ENCODE measurements at regions of chr1 and their contacts with region 1.

Region 1: GRCh38 chr1:40449684-40450494 is at the start of gene ZFP69B:
- DNase-seq: peak; percentile 94
- H3K4me3 ChIP-seq: peak within 1 kb of the TSS; percentile 30 to 84 (median 54)
- H3K27ac ChIP-seq: peak within 1 kb of the TSS; percentile 63
- H3K4me1 ChIP-seq: peaks cover 10% of the 10 kb centered on the region
- H3K27me3 ChIP-seq: no peaks in the 10 kb centered on the region
- CTCF ChIP-seq: peak in 1 of 2 donors; percentile 33
- POLR2A ChIP-seq: peak; percentile 64
- total RNA-seq, gene ZFP69B: 2.7 and 3.4 TPM in 2 replicates

Region 2: DNA sequence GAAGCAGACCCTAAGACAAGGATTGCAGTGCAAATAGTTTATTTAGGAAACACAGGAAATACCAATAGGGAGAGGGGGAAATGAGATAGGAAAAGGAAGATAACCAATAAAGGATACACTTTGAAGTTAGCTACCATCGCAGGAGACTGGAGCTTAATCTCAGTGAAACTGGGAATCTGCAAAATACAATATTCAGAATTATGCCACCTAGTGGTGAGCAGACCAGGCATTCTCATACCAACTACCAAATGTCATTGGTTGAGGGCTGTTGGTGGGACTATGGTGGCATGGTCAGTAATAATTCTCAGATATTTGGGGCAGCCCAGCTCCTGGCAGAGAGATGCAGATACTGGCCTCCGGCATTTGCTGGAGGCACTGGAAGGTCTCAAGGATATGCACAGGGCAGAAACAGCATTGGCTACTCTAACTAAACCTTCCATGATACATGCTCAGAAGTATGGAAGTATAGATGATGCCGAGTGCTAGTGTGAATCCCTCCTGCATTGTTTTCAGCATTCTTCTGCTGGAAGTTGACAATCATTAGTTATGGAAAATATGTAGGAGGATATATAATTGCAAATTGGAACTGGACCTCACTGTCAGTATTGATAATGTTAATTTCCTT is 11.4 kb before region 1 on chr1:
- CTCF ChIA-PET with region 1: interaction called, 28 read pairs
- POLR2A ChIA-PET with region 1: interaction called, 5 read pairs
- dilution Hi-C with region 1: no loop called
- intact Hi-C with region 1: no loop called
- DNase-seq: peak; percentile 51
- H3K4me3 ChIP-seq: no peak overlapping the region
- H3K27ac ChIP-seq: no peak overlapping the region
- H3K4me1 ChIP-seq: no peaks in the 10 kb centered on the region
- H3K27me3 ChIP-seq: no peaks in the 10 kb centered on the region
- CTCF ChIP-seq: peak; percentile 67 to 82
- POLR2A ChIP-seq: no peak

Region 3: GRCh38 chr1:40476924-40477677 is 27.2 kb after region 1 on chr1 and contains the start of gene ZFP69:
- CTCF ChIA-PET with region 1: interaction called, 5 read pairs
- POLR2A ChIA-PET with region 1: no interaction called
- dilution Hi-C with region 1: no loop called
- intact Hi-C with region 1: loop called (anchors 2 kb)
- DNase-seq: peak; percentile 52
- H3K4me3 ChIP-seq: peak within 1 kb of the TSS; percentile 40 to 95 (median 95)
- H3K27ac ChIP-seq: peak within 1 kb of the TSS; percentile 28
- H3K4me1 ChIP-seq: peaks cover 12% of the 10 kb centered on the region
- H3K27me3 ChIP-seq: no peaks in the 10 kb centered on the region
- CTCF ChIP-seq: no peak
- POLR2A ChIP-seq: peak; percentile 72
- total RNA-seq, gene ZFP69: 2.4 and 3.2 TPM in 2 replicates

Region 4: GRCh38 chr1:40495315-40495903 is 45.5 kb after region 1 on chr1:
- CTCF ChIA-PET with region 1: no interaction called
- POLR2A ChIA-PET with region 1: no interaction called
- dilution Hi-C with region 1: no loop called
- intact Hi-C with region 1: no loop called
- DNase-seq: no peak
- H3K4me3 ChIP-seq: no peak overlapping the region
- H3K27ac ChIP-seq: no peak overlapping the region
- H3K4me1 ChIP-seq: no peaks in the 10 kb centered on the region
- H3K27me3 ChIP-seq: no peaks in the 10 kb centered on the region
- CTCF ChIP-seq: no peak
- POLR2A ChIP-seq: no peak

Region 5: GRCh38 chr1:40508375-40509341 is 58.8 kb after region 1 on chr1 and contains the start of gene EXO5:
- CTCF ChIA-PET with region 1: interaction called, 3 read pairs
- POLR2A ChIA-PET with region 1: interaction called, 3 read pairs
- dilution Hi-C with region 1: no loop called
- intact Hi-C with region 1: loop called (anchors 2 kb)
- DNase-seq: peak; percentile 82
- H3K4me3 ChIP-seq: peak within 1 kb of the TSS; percentile 61 to 79 (median 78)
- H3K27ac ChIP-seq: peak within 1 kb of the TSS; percentile 13
- H3K4me1 ChIP-seq: peaks cover 9% of the 10 kb centered on the region
- H3K27me3 ChIP-seq: no peaks in the 10 kb centered on the region
- CTCF ChIP-seq: no peak
- POLR2A ChIP-seq: peak; percentile 91
- total RNA-seq, gene EXO5: 9.2 and 13.0 TPM in 2 replicates

Region 6: GRCh38 chr1:40668769-40669525 is 219.1 kb after region 1 on chr1:
- CTCF ChIA-PET with region 1: no interaction called
- POLR2A ChIA-PET with region 1: no interaction called
- dilution Hi-C with region 1: no loop called
- intact Hi-C with region 1: no loop called
- DNase-seq: peak; percentile 78
- H3K4me3 ChIP-seq: no peak overlapping the region
- H3K27ac ChIP-seq: no peak overlapping the region
- H3K4me1 ChIP-seq: no peaks in the 10 kb centered on the region
- H3K27me3 ChIP-seq: peaks cover 16 to 20% of the 10 kb centered on the region in 2 experiments
- CTCF ChIP-seq: peak; percentile 87 to 91
- POLR2A ChIP-seq: no peak

Measured in endothelial cell of umbilical vein (primary cell).